Dendritic cell treated with granulocyte-macrophage colony-stimulating factor and Interleukin-4, amounts not matched to agents 40 ng/mL and 50 ng/mL, for 4 days (primary cell): ENCODE measurements at regions of chr15 and their contacts with region 1.

Region 1: GRCh38 chr15:68354923-68355322 is 77.0 kb downstream of the ITGA11 start:
- H3K4me3 Mint-ChIP-seq: no peak overlapping the region
- H3K27ac Mint-ChIP-seq: peak overlapping the region; percentile 88
- H3K4me1 Mint-ChIP-seq: peaks cover 62% of the 10 kb centered on the region
- H3K27me3 Mint-ChIP-seq: no peaks in the 10 kb centered on the region

Region 2: GRCh38 chr15:68335251-68335650 is 19.7 kb before region 1 on chr15:
- intact Hi-C with region 1: loop called (anchors 2 kb)
- H3K4me3 Mint-ChIP-seq: no peak overlapping the region
- H3K27ac Mint-ChIP-seq: peak overlapping the region; percentile 98
- H3K4me1 Mint-ChIP-seq: peaks cover 87% of the 10 kb centered on the region
- H3K27me3 Mint-ChIP-seq: peaks cover 9% of the 10 kb centered on the region